Spleen (tissue), 13 donors: ENCODE measurements at regions of chr11 and their contacts with region 1.

Region 1: GRCh38 chr11:128624269-128625175 is 37.2 kb upstream of the ETS1 start:
- DNase-seq: peak; percentile 92
- H3K4me3 ChIP-seq: peak overlapping the region in 1 of 8 donors; percentile 34
- H3K27ac ChIP-seq: peak overlapping the region; percentile 78 to 93 (median 84)
- H3K4me1 ChIP-seq: peaks cover 45 to 100% (median 87%) of the 10 kb centered on the region in 6 donors
- H3K27me3 ChIP-seq: no peaks in the 10 kb centered on the region
- CTCF ChIP-seq: peak in 1 of 11 experiments; percentile 8
- POLR2A ChIP-seq: peak in 1 of 3 donors; percentile 33

Region 2: DNA sequence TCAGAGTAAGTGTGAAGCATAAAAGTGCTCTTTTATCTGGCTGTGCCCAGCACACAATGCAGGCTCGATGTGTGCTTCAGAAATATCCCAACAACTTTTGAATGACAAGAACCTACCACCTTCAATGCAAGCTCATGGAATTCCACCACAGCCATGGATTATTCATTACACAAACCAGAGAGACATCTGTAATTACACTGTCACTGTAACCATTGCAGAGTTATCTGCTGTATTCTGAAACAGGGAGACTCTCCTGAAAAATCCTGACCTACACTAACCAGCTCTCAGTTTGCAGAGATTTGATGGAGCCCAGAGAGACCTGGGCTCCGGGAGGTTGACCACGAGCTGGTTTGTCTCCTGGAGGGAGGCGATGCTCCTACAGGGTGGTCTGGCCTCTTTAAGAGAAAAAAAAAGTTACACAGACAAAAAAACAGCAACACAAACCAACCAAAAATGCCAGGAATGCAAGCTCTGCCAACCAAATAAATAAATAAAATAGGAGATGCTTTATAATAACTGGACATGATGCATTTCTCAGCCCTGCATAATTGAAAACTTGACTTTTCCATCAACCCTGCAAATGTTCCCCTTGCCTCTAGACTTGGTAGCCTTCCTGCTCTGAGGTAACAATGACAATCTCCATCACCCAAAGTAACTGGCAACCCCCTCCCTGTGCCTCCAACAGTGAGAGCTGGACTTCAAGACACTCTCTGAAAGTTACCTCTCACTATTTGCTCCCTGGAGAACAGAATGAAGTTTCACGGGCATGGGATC is 106.9 kb before region 1 on chr11:
- intact Hi-C with region 1: loop called (anchors 10 kb)
- DNase-seq: no peak
- H3K4me3 ChIP-seq: peak overlapping the region; percentile 51 to 86 (median 72)
- H3K27ac ChIP-seq: peak overlapping the region; percentile 95 to 99 (median 99)
- H3K4me1 ChIP-seq: peaks cover 43 to 92% (median 60%) of the 10 kb centered on the region in 6 donors
- H3K27me3 ChIP-seq: no peaks in the 10 kb centered on the region
- CTCF ChIP-seq: no peak
- POLR2A ChIP-seq: no peak

Region 3: DNA sequence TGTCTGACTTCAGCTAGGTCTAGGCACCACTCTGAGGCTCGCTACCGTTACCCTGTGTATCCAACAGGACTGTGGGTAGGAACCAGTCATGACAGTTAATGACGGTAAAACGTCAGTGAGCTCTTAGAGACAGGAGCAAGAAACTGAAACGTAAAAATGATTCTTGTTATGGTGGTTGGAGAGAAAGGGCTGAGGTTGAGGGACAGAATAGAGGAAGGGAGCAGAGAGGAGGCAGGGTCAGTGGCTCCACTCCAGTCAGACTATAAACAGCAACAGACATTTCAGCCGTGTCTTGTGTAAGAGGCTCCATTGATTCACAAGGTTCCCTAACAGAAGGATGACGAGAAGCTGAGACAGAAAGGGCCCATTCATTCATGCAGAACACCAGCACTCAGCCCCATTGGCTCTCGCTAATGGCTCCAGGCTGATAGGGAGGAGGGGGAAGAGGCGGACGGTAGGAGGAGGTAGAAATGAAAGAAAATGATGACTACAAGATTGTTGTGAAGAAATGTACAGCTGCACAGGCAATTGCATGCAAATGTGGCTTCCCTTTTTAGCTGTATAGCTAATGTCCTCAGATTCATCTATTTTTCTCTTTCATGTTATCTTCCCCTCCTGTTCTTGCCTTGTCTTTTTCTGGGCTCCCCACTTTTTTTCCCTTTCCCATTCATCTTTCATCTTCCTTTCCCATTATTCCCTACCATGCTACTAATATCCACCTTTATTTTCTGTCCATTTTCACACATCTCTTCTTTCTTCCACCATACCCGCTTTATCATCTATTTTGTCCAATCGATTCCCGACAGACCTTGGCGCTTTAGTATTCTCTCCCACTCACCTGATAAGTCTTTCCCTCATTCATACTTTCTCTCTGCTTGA is 71.5 kb before region 1 on chr11:
- intact Hi-C with region 1: loop called (anchors 10 kb)
- DNase-seq: peak; percentile 85
- H3K4me3 ChIP-seq: peak overlapping the region in 1 of 8 donors; percentile 43
- H3K27ac ChIP-seq: peak overlapping the region; percentile 57 to 93 (median 89)
- H3K4me1 ChIP-seq: peaks cover 31 to 81% (median 64%) of the 10 kb centered on the region in 6 donors
- H3K27me3 ChIP-seq: no peaks in the 10 kb centered on the region
- CTCF ChIP-seq: peak in 2 of 11 experiments; percentile 5 to 18
- POLR2A ChIP-seq: no peak

Region 4: GRCh38 chr11:128582496-128583366 is 41.8 kb before region 1 on chr11:
- intact Hi-C with region 1: no loop called
- DNase-seq: no peak
- H3K4me3 ChIP-seq: peak overlapping the region in 1 of 8 donors; percentile 44
- H3K27ac ChIP-seq: peak overlapping the region in 7 of 8 donors; percentile 4 to 76 (median 50)
- H3K4me1 ChIP-seq: peaks cover 4 to 80% (median 45%) of the 10 kb centered on the region in 6 donors
- H3K27me3 ChIP-seq: no peaks in the 10 kb centered on the region
- CTCF ChIP-seq: no peak
- POLR2A ChIP-seq: no peak

Region 5: DNA sequence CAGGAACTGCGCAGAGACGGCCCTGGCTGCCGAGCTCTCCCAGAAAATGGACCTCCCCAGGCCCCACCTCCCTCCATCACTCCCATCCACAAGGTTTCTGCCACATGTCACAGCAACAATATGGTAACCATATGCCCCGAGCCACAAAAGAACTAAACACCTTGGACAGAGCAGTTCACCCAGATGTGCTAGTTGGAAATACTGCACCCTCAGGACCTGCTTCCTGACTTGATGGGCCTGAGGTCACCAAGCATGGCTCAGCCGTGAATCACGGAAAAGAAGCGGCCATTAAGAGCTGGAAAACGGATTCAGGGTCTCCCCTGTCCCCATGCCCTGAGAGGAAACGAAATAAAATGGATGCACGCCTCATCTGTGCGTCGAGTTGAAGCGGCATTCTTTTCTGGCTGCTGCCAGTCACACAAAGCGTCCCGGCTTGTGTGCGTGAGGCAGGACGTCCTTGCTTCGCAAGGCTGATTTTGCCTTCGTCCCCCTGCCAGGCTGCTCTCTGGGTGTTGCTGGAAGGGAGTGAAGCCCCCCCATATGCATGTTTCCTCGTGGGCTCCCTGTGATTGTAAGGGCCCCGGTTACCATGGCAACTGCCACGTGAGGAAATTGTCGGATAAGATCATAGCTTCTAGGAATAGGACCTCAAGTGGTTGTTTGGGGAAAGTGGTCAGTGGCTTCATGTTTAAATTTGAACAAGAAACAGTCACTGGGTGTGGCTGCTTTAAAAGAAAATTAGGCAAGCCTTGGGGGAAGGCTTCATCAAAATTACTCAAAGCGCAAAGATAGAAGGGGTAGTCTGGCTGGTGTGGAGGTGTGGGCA is 121.0 kb after region 1 on chr11:
- intact Hi-C with region 1: no loop called
- DNase-seq: no peak
- H3K4me3 ChIP-seq: no peak overlapping the region
- H3K27ac ChIP-seq: peak overlapping the region; percentile 2 to 72 (median 46)
- H3K4me1 ChIP-seq: peaks cover 28 to 100% (median 90%) of the 10 kb centered on the region in 6 donors
- H3K27me3 ChIP-seq: no peaks in the 10 kb centered on the region
- CTCF ChIP-seq: peak in 1 of 11 experiments; percentile 6
- POLR2A ChIP-seq: no peak